Calu3 (cell line): ENCODE measurements at regions of chr10 and their contacts with region 1.

Region 1: DNA sequence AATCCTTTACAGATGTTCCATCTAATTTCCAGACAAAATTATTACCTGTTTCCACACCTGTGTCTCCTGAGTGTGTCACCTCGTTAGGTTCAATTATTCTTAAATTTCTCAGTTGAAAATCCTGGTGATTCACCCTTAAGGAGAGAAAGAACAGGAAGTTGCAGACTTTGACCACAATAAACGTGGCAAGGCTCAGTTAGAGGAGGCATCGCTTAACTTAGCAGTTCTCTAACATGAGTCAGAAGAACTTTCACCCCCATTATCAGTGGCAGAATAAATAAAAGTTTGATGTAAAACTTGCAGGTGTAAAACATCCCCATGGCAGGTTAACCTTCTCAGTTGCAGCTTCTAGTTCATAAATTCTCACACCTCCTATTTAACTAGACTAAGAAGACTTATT is 8.3 kb downstream of the XPNPEP1 start:
- DNase-seq: peak; percentile 27
- H3K4me3 Mint-ChIP-seq: peak overlapping the region; percentile 27
- H3K27ac Mint-ChIP-seq: peak overlapping the region; percentile 83
- H3K4me1 Mint-ChIP-seq: peaks cover 48% of the 10 kb centered on the region
- H3K27me3 Mint-ChIP-seq: no peaks in the 10 kb centered on the region
- CTCF ChIP-seq: no peak

Region 2: DNA sequence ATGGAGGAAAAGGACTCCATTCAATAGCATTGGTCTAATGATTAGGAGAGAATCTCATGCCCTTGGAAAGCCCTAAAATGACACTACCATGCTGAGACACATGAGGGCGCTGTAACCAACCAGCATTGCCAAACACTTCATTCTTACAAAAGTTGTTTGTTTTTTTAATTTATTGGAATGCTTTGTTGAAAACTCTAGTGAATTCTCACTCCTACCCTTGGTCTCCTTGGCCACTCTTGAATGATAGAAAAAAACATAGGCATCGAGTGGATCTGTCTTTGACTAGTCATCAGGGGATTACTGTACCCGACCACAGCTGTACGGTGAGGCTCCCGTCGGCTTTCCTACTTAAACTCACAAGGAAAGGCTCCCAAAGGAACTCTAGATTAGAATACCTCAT is 63.5 kb after region 1 on chr10:
- CTCF ChIA-PET with region 1: interaction called, 3 read pairs
- intact Hi-C with region 1: loop called (anchors 10 kb)
- DNase-seq: peak; percentile 41
- H3K4me3 Mint-ChIP-seq: no peak overlapping the region
- H3K27ac Mint-ChIP-seq: no peak overlapping the region
- H3K4me1 Mint-ChIP-seq: peaks cover 31% of the 10 kb centered on the region
- H3K27me3 Mint-ChIP-seq: no peaks in the 10 kb centered on the region
- CTCF ChIP-seq: peak; percentile 35